Spleen (tissue), 13 donors: ENCODE measurements at regions of chr3 and their contacts with region 1.

Region 1: GRCh38 chr3:52339612-52340011 is 23.5 kb downstream of the DNAH1 start:
- DNase-seq: no peak
- H3K4me3 ChIP-seq: no peak overlapping the region
- H3K27ac ChIP-seq: no peak overlapping the region
- H3K4me1 ChIP-seq: peaks cover 0 to 23% (median 7%) of the 10 kb centered on the region in 6 donors
- H3K27me3 ChIP-seq: no peaks in the 10 kb centered on the region
- CTCF ChIP-seq: peak; percentile 22 to 92 (median 62)
- POLR2A ChIP-seq: no peak

Region 2: DNA sequence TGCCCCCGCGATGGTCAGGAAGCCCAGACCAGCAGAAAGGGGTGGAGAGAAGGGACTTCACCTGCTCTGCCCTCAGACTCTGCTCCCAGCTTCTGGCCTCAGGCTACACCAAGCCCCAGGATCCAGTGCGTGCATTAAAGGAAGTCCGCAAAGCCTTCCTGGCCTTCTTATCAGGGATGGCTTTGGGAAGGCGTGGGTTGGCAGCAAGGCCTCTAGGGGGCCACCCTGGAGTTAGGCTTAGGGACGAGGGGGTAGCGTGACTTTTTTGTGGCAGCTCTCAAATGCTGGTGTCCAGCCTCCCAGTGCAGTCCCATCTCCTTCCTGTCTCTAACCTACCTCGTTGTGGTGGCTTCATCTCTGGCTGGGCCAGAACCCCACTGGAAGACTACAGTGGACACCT is 325.0 kb before region 1 on chr3:
- intact Hi-C with region 1: no loop called
- DNase-seq: no peak
- H3K4me3 ChIP-seq: no peak overlapping the region
- H3K27ac ChIP-seq: no peak overlapping the region
- H3K4me1 ChIP-seq: peaks cover 0 to 69% (median 36%) of the 10 kb centered on the region in 6 donors
- H3K27me3 ChIP-seq: no peaks in the 10 kb centered on the region
- CTCF ChIP-seq: peak in 5 of 11 experiments; percentile 7 to 35 (median 19)
- POLR2A ChIP-seq: no peak

Region 3: DNA sequence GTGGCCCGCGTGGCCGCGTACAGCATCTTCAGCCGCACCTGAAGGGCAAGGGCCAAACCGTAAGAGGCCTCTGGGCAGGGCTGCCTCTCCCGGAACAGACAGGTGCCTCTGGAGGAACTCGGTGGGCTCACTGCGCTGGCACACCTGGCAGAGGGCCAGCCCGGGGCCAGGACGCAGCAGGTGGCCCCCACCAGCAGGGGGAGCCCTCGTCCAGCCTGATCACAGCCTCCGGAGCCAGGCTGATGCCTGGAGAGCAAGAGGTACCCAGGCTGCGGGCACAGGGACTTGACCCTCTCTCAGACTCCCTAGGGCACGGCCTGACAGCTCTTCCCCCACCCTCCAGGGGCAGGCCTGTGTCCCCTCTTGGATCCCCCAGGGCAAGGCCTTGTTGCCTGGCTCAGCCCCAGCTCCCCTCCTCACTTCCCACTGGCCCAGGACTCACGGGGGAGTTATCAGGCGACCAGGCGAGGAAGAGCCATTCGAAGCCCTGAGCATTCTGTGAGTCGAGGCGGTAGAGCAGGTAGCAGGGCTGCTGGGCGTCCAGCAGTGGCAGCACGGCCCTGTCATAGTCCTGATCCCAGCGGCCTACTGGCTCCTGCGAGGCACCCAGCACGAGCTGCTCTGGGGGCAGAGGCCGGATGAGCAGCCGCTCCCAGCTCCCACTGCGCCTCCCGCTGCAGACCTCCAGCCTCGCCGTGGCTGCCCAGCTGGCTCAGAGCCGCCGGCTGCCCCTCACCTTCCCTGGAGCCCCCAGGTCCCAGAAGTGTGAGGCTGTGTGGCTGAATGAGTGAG is 107.9 kb before region 1 on chr3:
- intact Hi-C with region 1: loop called (anchors 5 kb)
- DNase-seq: peak; percentile 96
- H3K4me3 ChIP-seq: no peak overlapping the region
- H3K27ac ChIP-seq: peak overlapping the region in 3 of 8 donors; percentile 36 to 51 (median 51)
- H3K4me1 ChIP-seq: peaks cover 7 to 75% (median 55%) of the 10 kb centered on the region in 6 donors
- H3K27me3 ChIP-seq: no peaks in the 10 kb centered on the region
- CTCF ChIP-seq: peak; percentile 89 to 98 (median 94)
- POLR2A ChIP-seq: no peak

Region 4: DNA sequence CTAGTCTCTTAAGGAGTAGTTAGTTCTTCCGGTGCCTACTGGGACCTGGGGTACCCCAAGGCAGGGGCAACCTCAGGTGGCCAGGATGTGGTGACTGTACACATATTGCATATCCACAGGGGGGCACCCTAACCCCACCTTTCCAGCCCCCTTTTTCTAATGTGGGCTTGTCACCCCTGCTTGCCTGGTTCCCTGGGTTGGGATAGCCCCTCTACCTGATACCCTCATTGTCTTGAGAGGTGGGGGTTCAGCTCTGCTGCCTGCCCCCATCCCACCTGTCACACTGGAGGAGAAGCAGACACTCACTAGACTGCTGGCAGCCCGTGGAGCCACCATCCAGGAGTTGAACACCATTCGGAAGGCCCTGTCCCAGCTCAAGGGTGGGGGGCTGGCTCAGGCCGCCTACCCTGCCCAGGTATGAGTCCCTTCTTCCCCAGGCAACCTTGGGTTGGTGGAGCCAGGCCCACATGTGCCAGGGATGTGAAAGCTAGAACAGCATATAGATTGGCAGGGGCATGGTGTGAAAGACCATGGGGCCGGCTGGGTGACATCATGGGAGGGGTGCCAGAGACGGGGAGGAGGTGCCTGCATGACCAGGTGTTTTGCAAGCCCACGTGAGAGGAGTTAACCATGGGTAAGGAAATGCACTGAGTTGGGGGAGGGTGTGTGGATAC is 48.0 kb before region 1 on chr3:
- intact Hi-C with region 1: loop called (anchors 5 kb)
- DNase-seq: peak; percentile 79
- H3K4me3 ChIP-seq: no peak overlapping the region
- H3K27ac ChIP-seq: no peak overlapping the region
- H3K4me1 ChIP-seq: peaks cover 5 to 47% (median 21%) of the 10 kb centered on the region in 6 donors
- H3K27me3 ChIP-seq: no peaks in the 10 kb centered on the region
- CTCF ChIP-seq: peak in 9 of 11 experiments; percentile 37 to 64 (median 53)
- POLR2A ChIP-seq: no peak

Region 5: GRCh38 chr3:52385157-52385556 is 45.5 kb after region 1 on chr3:
- intact Hi-C with region 1: no loop called
- DNase-seq: no peak
- H3K4me3 ChIP-seq: no peak overlapping the region
- H3K27ac ChIP-seq: no peak overlapping the region
- H3K4me1 ChIP-seq: peaks cover 0 to 5% (median 0%) of the 10 kb centered on the region in 6 donors
- H3K27me3 ChIP-seq: no peaks in the 10 kb centered on the region
- CTCF ChIP-seq: peak in 4 of 11 experiments; percentile 10 to 27 (median 18)
- POLR2A ChIP-seq: no peak

Region 6: DNA sequence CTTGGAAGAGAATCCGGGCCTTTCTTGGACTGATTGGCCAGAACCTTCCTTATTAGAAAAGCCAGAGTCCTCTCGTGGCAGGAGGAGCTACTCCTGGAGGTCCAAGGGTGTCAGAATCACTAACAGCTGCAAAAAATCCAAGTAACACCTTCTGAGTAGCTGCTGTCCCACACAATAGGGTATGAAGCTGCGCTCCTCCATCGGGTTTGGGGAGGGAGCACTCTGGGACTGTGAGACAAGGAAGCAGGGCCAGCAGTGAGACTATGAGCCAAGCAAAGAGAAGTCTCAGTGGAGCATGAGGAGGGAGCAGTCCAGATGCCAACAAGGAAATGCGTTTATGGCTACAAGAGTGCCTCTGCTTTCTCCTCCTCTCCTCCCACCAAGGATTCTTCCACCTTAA is 83.6 kb after region 1 on chr3:
- intact Hi-C with region 1: no loop called
- DNase-seq: peak; percentile 29
- H3K4me3 ChIP-seq: no peak overlapping the region
- H3K27ac ChIP-seq: no peak overlapping the region
- H3K4me1 ChIP-seq: no peaks in the 10 kb centered on the region
- H3K27me3 ChIP-seq: no peaks in the 10 kb centered on the region
- CTCF ChIP-seq: no peak
- POLR2A ChIP-seq: no peak